IMR-90 (cell line): ENCODE measurements at regions of chr1 and their contacts with region 1.

Region 1: GRCh38 chr1:101603726-101604125 is 366.9 kb downstream of the S1PR1 start:
- DNase-seq: no peak
- ATAC-seq: no peak
- H3K4me3 ChIP-seq: no peak overlapping the region
- H3K27ac ChIP-seq: no peak overlapping the region
- H3K4me1 ChIP-seq: no peaks in the 10 kb centered on the region
- H3K27me3 ChIP-seq: no peaks in the 10 kb centered on the region
- CTCF ChIP-seq: no peak
- POLR2A ChIP-seq: no peak
- RAD21 ChIP-seq: no peak

Region 2: DNA sequence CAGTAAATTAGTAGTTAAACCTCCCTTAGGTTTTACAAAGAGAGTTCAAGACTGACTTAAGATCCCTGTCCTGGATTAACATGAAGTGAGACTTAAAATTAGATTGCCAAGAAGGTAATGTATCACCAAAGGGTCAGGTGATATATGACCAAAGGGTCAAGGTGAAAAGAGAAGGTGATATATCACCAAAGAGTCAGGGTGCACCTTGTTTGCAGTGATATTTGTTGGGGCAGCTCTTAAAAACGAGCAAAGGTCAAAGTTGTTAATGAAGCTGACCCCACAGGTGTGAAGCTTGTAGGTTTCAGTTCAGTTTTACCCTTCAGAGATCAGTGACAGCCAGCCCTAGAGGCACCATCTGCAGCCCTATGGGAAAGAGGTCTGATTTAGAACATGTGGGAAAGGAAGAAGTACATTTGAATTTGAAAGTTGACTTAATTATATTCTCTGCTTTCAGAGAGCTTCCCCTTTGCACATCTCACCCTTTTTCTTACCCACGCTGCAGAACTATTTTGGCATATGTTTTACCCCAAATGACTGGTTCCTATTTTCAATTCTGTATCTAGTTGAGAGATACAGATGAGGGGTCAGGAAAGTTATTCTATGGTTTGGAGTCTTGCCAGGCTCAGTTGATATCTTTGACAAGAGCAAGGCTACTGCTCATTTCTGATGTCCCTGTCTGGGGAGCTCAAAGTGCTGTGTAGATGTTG is 196.1 kb before region 1 on chr1:
- CTCF ChIA-PET with region 1: no interaction called
- POLR2A ChIA-PET with region 1: no interaction called
- dilution Hi-C with region 1: no loop called
- in situ Hi-C with region 1: no loop called
- intact Hi-C with region 1: no loop called
- DNase-seq: no peak
- ATAC-seq: no peak
- H3K4me3 ChIP-seq: no peak overlapping the region
- H3K27ac ChIP-seq: no peak overlapping the region
- H3K4me1 ChIP-seq: no peaks in the 10 kb centered on the region
- H3K27me3 ChIP-seq: no peaks in the 10 kb centered on the region
- CTCF ChIP-seq: no peak
- POLR2A ChIP-seq: no peak
- RAD21 ChIP-seq: no peak

Region 3: GRCh38 chr1:101550581-101550980 is 53.1 kb before region 1 on chr1:
- CTCF ChIA-PET with region 1: no interaction called
- POLR2A ChIA-PET with region 1: no interaction called
- dilution Hi-C with region 1: no loop called
- in situ Hi-C with region 1: loop called (anchors 10 kb)
- intact Hi-C with region 1: no loop called
- DNase-seq: no peak
- ATAC-seq: no peak
- H3K4me3 ChIP-seq: no peak overlapping the region
- H3K27ac ChIP-seq: no peak overlapping the region
- H3K4me1 ChIP-seq: no peaks in the 10 kb centered on the region
- H3K27me3 ChIP-seq: no peaks in the 10 kb centered on the region
- CTCF ChIP-seq: no peak
- POLR2A ChIP-seq: no peak
- RAD21 ChIP-seq: no peak

Region 4: DNA sequence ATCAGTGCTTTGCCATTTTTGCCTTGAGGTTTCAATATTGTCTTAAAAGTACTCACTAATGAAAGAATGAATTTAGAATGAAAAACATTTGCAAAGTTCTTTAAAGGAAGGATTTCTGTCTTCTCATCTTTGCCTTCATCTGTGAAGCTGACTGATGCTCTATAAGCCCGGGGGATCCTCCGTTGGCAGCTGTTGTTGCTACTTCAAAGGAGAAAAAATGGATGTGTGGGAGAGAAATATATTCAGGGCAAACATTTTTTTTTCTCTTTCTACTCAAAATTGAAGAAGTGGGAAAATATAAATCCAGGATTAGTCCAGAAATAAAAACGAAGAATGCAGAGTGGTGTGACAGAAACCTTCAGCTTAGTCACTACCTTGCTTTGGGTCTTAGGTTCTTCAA is 250.5 kb after region 1 on chr1:
- CTCF ChIA-PET with region 1: no interaction called
- POLR2A ChIA-PET with region 1: no interaction called
- dilution Hi-C with region 1: no loop called
- in situ Hi-C with region 1: no loop called
- intact Hi-C with region 1: no loop called
- DNase-seq: no peak
- ATAC-seq: no peak
- H3K4me3 ChIP-seq: no peak overlapping the region
- H3K27ac ChIP-seq: no peak overlapping the region
- H3K4me1 ChIP-seq: no peaks in the 10 kb centered on the region
- H3K27me3 ChIP-seq: no peaks in the 10 kb centered on the region
- CTCF ChIP-seq: no peak
- POLR2A ChIP-seq: no peak
- RAD21 ChIP-seq: no peak